ENCODE measurements at regions of chr3 and their contacts with region 1.

Region 1: GRCh38 chr3:11271986-11272904 is at the start of gene ATG7:
- DNase-seq: peak; percentile 78
- H3K4me3 ChIP-seq: peak within 1 kb of the TSS; percentile 85
- H3K27me3 ChIP-seq: no peaks in the 10 kb centered on the region
- CTCF ChIP-seq: no peak
- polyA plus RNA-seq, gene ATG7: 26.2 and 32.6 TPM in 2 replicates

Region 2: DNA sequence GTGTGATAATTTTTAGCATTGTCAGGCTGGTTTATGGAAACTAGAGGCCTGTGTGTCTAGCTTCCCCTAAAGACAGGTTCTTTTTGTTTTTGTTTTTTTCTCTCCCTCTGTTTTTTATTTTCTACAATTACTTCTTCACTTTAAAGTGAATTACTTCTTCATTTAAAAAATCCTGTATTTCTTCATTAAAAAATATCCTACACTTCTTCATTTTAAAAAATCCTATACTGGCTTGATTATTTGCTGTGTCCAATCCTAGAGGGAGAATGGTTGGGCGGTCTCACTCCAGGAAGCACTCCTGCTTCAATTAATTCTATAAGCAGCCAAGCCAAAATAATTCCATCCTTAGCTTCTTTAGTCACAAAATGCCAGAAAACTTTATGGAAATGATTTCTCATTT is 11.8 kb after region 1 on chr3:
- CTCF ChIA-PET with region 1: interaction called, 13 read pairs
- POLR2A ChIA-PET with region 1: interaction called, 6 read pairs
- DNase-seq: no peak
- H3K4me3 ChIP-seq: no peak overlapping the region
- H3K27me3 ChIP-seq: no peaks in the 10 kb centered on the region
- CTCF ChIP-seq: no peak

Measured in BJ (cell line).